ENCODE measurements at regions of chr2 and their contacts with region 1.

Region 1: DNA sequence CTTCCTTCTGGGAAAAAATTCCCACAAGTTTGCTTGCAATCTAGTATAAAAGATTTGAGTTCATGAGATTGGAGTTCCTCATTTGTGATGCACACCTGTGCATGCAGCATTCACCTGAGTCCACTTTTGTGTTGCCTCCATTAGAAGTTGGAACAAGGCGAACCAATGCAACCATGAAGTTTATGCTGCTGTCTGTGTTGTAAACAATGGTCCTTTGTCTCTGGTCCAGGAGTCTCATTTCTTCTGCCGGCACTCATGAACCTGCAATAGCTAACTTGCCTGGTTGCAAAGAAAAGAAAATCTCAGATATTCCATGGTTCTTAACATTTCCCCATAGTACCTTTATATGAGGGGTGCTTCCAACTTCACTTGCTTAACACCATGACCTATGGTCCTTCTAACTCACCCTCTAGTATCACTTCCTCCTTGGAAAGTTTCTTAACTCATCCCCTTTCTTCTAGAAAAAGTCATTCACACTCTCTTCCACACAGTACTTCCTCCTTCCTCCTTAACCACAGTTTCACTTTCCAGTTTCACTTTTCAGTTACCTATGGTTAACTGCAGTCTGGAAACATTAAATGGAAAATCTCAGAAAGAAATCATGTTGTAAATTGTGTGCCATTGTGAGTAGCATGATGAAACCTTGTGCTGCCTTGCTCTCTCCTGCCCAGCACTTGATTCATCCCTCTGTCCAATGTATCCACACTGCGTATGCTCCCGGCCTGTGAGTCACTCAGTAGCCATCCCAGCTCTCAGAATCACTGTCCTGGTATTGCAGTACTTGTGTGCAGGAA is 128.8 kb upstream of the TRIB2 start:
- DNase-seq: no peak
- ATAC-seq: peak; percentile 91
- H3K4me3 Mint-ChIP-seq: peak overlapping the region; percentile 36
- H3K27ac Mint-ChIP-seq: peak overlapping the region; percentile 70
- H3K4me1 Mint-ChIP-seq: peaks cover 56% of the 10 kb centered on the region
- H3K27me3 Mint-ChIP-seq: no peaks in the 10 kb centered on the region
- CTCF ChIP-seq: no peak

Region 2: DNA sequence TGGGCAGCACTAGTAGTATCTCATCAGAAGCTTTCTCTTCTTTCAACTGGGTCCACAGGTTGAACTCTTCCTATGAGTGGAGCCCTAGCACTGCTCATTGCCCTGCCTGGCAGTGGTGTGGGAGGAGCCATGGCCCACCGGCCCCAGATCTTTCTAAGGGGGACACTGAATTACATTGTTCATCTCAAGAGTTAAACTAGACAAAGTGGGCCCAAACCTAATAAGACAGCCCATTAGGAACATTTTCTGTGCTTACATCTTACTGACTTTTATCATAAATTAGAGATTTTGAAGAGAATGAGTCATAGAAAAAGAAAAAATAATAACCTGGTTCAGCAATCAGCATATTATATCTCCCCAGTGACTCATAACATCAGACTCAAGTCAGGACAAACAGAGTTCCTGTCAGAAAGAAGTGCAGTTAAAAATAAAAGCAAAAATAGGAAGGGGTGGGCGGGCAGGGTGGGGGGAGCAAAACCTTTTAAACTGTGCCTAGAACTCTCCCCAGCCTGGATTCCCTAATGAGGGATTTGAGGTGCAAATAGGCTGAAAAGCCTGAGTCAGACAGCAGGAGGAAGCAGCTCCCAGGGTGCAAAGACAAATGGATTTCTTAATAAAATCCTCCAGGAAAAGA is 32.8 kb before region 1 on chr2:
- CTCF ChIA-PET with region 1: no interaction called
- POLR2A ChIA-PET with region 1: no interaction called
- intact Hi-C with region 1: loop called (anchors 2 kb)
- DNase-seq: no peak
- ATAC-seq: peak; percentile 67
- H3K4me3 Mint-ChIP-seq: peak overlapping the region; percentile 25
- H3K27ac Mint-ChIP-seq: peak overlapping the region; percentile 64
- H3K4me1 Mint-ChIP-seq: peaks cover 53% of the 10 kb centered on the region
- H3K27me3 Mint-ChIP-seq: no peaks in the 10 kb centered on the region
- CTCF ChIP-seq: no peak